Psoas muscle (tissue), 8 donors: ENCODE measurements at regions of chr2 and their contacts with region 1.

Region 1: DNA sequence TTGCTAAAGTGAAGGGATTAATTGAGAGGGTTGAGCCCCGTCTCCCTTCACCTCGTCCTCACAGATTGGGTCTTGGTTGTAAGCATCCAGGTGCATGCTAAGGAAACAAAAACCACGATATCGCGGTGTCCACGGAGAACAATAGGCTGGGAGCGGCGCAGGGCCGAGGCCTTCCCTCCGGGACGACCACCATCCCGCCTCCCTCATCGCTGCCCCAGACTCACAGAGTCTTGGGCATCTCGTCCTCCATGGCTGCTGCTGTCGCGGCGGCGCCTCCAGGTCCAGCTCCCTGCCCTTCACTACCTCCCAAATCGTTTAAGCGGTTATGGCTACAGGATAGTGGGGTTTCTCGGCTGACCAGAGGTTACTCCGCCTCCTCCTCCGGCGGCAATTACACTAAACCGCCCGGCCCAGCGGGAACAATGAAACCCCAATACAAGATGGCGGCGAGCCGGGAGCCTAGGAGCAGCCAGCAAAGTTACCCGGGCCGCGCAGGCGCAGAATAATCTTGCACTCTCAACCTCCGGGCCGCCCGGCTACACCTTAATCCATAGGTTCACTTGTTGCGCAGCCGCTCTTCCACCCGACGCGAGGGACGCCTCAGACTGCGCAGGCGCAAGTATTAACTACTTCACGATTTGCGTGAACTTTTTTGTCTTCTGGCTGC is at the start of gene TIA1:
- DNase-seq: peak; percentile 99
- ATAC-seq: peak; percentile 98 to 99 (median 99)
- H3K4me3 ChIP-seq: peak within 1 kb of the TSS; percentile 84
- H3K27ac ChIP-seq: peak within 1 kb of the TSS; percentile 92
- H3K4me1 ChIP-seq: peaks cover 39% of the 10 kb centered on the region
- H3K27me3 ChIP-seq: no peaks in the 10 kb centered on the region
- CTCF ChIP-seq: no peak
- total RNA-seq, gene TIA1: 24.7 to 38.1 (median 29.7) TPM

Region 2: GRCh38 chr2:69893684-69894551 is 354.4 kb before region 1 on chr2 and contains the start of gene SNRNP27:
- intact Hi-C with region 1: loop called in 1 of 2 experiments (anchors 10 kb)
- DNase-seq: peak; percentile 79 to 89
- ATAC-seq: peak; percentile 91 to 95 (median 92)
- H3K4me3 ChIP-seq: peak within 1 kb of the TSS; percentile 72
- H3K27ac ChIP-seq: peak within 1 kb of the TSS; percentile 88
- H3K4me1 ChIP-seq: peaks cover 22% of the 10 kb centered on the region
- H3K27me3 ChIP-seq: no peaks in the 10 kb centered on the region
- CTCF ChIP-seq: no peak
- total RNA-seq, gene SNRNP27: 78.7 to 113 (median 90.2) TPM

Region 3: DNA sequence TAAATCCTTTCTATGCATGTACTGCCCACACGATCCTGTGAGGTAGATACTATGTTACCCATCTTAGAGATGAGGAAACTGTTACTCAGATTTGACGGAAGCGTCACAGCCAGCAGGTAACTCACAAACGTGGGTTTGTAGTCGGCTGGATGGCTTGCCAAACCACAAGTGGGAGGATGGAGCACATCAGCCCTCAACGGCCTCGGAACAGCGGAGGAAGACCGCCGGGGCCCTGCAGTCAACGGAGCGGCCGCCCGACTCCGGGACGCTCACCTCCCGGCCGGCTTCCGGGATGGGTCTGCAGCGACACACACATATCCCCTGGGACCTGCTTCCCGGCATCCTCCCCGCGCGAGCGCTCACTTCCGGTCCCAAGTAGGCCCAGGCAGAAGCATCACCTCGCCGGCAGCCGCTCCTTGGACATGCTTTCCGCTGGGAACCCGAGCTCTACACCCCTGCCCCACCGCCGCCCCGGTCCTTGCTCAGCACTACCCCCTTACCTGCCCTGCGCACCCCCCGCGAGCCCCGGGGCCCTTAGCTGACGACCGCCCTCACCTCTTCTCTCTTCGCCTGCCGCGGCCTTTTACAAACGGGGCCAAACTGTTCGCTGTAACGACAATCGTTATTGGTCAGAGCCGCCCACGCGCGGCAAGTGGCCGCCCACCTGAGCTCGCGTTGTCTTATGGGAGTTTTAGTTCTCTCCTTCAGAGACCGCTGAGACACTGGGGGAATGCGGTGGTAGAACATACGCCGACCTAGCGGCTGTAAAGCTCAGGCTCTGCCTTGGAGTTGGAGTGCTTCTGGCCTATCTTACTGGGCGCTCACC is 57.7 kb before region 1 on chr2 and contains the start of gene C2orf42:
- intact Hi-C with region 1: loop called (anchors 5 kb)
- DNase-seq: peak; percentile 96 to 98
- ATAC-seq: peak; percentile 97 to 99 (median 98)
- H3K4me3 ChIP-seq: peak within 1 kb of the TSS; percentile 80
- H3K27ac ChIP-seq: peak within 1 kb of the TSS; percentile 87
- H3K4me1 ChIP-seq: no peaks in the 10 kb centered on the region
- H3K27me3 ChIP-seq: no peaks in the 10 kb centered on the region
- CTCF ChIP-seq: no peak
- total RNA-seq, gene C2orf42: 6.4 to 11.0 (median 9.2) TPM